ENCODE measurements at regions of chr22 and their contacts with region 1.

Region 1: GRCh38 chr22:31872209-31872608 is 72.1 kb upstream of the YWHAH start:
- DNase-seq: peak; percentile 27
- H3K4me3 ChIP-seq: no peak overlapping the region
- H3K27ac ChIP-seq: no peak overlapping the region
- H3K4me1 ChIP-seq: no peaks in the 10 kb centered on the region
- CTCF ChIP-seq: peak; percentile 69

Region 2: GRCh38 chr22:31891366-31892079 is 19.3 kb after region 1 on chr22:
- CTCF ChIA-PET with region 1: no interaction called
- POLR2A ChIA-PET with region 1: no interaction called
- intact Hi-C with region 1: no loop called
- DNase-seq: no peak
- H3K4me3 ChIP-seq: no peak overlapping the region
- H3K27ac ChIP-seq: no peak overlapping the region
- H3K4me1 ChIP-seq: no peaks in the 10 kb centered on the region
- CTCF ChIP-seq: no peak

Region 3: DNA sequence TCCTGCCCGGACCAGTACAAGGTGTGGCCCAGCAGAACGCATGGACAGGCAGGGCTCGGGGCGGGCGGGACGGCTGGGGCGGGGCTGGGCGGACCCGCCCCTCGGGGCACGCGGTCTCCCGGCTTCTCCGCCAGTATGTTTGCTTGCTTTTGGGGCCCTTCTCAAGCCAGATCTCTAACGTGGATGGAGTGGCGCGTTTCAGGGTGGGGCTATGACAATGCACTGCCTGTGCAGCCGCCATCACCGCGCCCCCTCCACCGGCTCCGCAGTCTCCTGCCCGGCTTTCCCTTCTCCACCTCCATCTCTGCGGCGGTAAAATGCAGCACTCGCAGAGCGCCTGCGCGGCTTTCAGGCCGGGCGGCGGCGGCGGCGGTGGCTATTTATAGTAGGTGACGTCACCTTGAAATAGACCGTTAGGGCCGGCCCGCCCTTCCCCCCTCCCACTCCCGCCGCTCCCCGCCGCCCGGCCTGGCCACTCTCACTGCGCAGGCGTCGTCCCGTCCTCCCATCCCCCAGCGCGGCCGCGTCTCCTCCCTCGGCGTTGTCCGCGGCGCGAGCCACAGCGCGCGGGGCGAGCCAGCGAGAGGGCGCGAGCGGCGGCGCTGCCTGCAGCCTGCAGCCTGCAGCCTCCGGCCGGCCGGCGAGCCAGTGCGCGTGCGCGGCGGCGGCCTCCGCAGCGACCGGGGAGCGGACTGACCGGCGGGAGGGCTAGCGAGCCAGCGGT is 71.9 kb after region 1 on chr22 and contains the start of gene YWHAH:
- CTCF ChIA-PET with region 1: no interaction called
- POLR2A ChIA-PET with region 1: interaction called, 4 read pairs
- intact Hi-C with region 1: loop called (anchors 2 kb)
- DNase-seq: peak; percentile 94
- H3K4me3 ChIP-seq: peak within 1 kb of the TSS; percentile 99
- H3K27ac ChIP-seq: peak within 1 kb of the TSS; percentile 87
- H3K4me1 ChIP-seq: peaks cover 37% of the 10 kb centered on the region
- CTCF ChIP-seq: no peak
- total RNA-seq, gene YWHAH: 103 and 113 TPM in 2 replicates

Region 4: GRCh38 chr22:31954535-31955523 is 82.6 kb after region 1 on chr22:
- CTCF ChIA-PET with region 1: no interaction called
- POLR2A ChIA-PET with region 1: no interaction called
- intact Hi-C with region 1: no loop called
- DNase-seq: no peak
- H3K4me3 ChIP-seq: no peak overlapping the region
- H3K27ac ChIP-seq: no peak overlapping the region
- H3K4me1 ChIP-seq: peaks cover 7% of the 10 kb centered on the region
- CTCF ChIP-seq: no peak

Region 5: DNA sequence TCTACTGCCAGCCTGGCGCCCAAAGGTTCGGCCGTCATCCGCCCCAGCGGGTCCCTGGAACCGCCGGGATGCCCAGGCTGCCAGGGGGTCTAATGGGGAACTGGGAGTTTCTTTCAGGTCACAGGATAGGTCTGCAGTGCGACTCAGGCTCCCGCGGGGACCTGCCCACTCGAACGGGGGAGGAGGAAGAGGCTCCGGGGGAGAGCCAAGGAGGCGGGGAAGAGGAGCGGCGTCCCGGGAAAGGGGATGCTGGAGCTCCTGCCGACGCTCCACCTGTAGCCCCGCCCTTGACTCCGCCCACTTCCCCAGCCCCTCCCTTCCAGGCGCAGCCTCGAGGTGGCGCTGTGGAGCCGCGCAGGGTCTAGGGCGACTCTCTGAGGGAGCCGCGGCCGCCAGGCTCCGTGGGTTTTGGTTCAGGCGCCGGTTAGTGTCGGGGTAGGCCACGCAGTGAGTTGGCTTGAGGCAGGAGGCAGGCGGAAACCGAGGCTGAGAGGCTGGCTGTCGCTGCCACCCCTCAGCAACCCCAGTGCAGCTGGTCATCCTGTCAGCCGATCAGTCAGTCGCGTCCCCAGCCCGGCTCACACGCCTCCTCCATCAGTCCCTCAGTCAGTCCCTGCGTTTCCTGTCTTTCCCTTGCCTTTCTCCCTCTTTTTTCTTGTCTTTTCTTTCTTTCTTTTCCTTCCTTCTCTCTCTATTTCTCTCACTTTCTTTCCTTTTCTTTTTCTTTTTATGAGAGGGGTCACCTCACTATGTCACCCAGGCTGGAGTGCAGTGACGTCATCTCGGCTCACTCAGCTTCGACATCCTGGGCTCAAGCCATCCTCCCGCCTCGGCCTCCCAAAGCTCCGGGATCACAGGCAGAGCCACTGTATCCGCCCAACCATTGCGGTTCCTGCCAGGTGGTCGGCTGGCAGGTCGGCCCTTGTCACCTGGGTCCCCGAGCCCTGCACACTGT is 98.6 kb after region 1 on chr22:
- CTCF ChIA-PET with region 1: no interaction called
- POLR2A ChIA-PET with region 1: no interaction called
- intact Hi-C with region 1: loop called (anchors 1 kb)
- DNase-seq: peak; percentile 63
- H3K4me3 ChIP-seq: peak overlapping the region; percentile 65
- H3K27ac ChIP-seq: no peak overlapping the region
- H3K4me1 ChIP-seq: peaks cover 15% of the 10 kb centered on the region
- CTCF ChIP-seq: peak; percentile 64

Region 6: GRCh38 chr22:32042924-32043790 is 170.9 kb after region 1 on chr22 and contains the start of gene SLC5A1:
- CTCF ChIA-PET with region 1: no interaction called
- POLR2A ChIA-PET with region 1: no interaction called
- intact Hi-C with region 1: no loop called
- DNase-seq: no peak
- H3K4me3 ChIP-seq: no peak within 1 kb of the TSS
- H3K27ac ChIP-seq: no peak within 1 kb of the TSS
- H3K4me1 ChIP-seq: no peaks in the 10 kb centered on the region
- CTCF ChIP-seq: no peak
- total RNA-seq, gene SLC5A1: not detected in 2 replicates